ENCODE measurements at regions of chr9 and their contacts with region 1.

Region 1: GRCh38 chr9:88236531-88237478 is 98.5 kb upstream of the SPATA31C2 start:
- DNase-seq: peak in 7 of 10 donors; percentile 20 to 89 (median 37)

Region 2: DNA sequence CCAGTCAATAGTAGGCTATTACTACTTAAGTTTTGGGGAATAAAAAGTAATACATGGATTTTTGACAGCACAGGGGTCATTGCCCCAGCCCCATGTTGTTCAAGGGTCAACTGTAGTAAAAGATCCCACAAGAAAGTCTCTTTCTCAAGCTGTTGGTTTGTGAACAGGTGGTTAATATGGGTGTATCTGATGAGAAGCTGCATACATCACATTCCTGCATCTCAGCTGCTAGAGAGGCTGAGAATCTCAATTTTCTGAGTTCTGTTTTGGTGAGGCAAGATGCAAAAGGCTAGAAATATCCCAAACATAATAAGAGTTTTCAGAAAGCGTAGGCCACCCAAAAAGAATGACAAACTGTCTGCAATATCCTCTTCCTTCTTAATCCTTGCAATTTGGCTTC is 815.9 kb before region 1 on chr9:
- intact Hi-C with region 1: no loop called
- DNase-seq: no peak

Region 3: GRCh38 chr9:88164850-88165249 is 72.0 kb before region 1 on chr9:
- intact Hi-C with region 1: no loop called
- DNase-seq: no peak

Region 4: DNA sequence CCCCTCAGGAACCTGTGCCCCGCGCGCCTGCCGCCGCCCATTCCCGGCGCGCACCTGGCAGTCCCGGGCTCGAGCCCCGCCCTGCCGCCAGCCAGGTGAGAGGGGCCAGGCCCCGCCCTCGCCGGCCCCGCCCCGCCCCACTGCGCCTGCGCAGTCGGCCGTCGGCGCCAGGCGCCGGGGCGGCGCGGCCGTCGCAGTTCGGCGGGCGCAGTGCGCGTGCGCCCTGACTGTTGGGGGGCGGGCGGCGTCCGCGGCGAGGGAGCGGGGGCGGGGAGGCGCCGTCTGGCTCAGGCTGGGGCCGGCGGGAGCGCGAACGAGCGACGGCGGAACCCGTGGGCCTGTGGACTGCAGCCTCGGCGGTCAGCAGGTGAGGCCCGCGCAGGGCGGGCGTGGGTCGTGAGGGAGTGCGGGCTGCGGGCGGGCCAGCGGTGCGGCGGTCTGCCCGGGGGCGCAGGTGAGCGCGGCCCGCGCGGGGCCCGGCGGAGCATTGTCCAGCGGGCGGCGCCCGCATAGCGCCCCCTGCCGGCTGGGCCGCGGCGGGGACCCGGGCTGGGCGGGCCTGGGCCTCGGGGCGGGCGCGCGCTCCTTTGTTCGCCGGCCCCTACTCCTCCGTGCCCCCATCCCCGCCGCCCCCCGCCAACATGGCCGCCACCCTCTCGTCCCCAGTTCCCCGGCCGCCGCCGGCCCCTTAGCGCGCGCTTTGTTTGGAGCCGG is 151.5 kb after region 1 on chr9 and contains the start of gene SPIN1:
- intact Hi-C with region 1: loop called (anchors 5 kb)
- DNase-seq: peak; percentile 47 to 94 (median 63)

Region 5: DNA sequence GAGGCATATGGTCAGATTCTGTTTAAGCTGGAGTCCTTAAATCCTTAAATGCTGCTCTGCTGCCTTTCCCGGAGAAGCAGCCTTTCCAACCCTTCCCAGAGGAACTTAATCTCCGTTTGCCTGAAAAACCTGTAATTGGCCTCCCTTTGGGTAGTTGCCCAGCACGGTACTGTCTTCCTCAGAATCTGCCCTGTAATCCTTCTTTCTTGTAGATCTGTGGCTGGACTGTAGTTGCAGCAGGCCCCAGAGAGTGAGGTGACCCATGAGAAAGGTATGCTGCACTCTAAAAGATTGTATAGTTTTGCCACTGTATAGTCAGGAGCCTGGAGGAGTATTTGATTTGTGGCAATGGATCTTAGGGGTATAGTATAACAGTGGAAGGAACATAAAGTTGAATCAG is 163.2 kb after region 1 on chr9:
- intact Hi-C with region 1: no loop called
- DNase-seq: no peak

Measured in posterior cingulate gyrus (tissue), 11 donors.